ENCODE measurements at regions of chr2 and their contacts with region 1.

Region 1: GRCh38 chr2:74845217-74846011 is 11.5 kb downstream of the HK2 start:
- DNase-seq: peak in 1 of 5 donors; percentile 57
- H3K4me3 ChIP-seq: no peak overlapping the region
- H3K4me3 Mint-ChIP-seq: peak overlapping the region; percentile 75 to 94 (median 80)
- H3K27ac ChIP-seq: peak overlapping the region; percentile 12
- H3K27ac Mint-ChIP-seq: peak overlapping the region; percentile 85 to 94 (median 90)
- H3K4me1 ChIP-seq: peaks cover 98% of the 10 kb centered on the region
- H3K4me1 Mint-ChIP-seq: peaks cover 62 to 100% (median 89%) of the 10 kb centered on the region in 4 donors
- H3K27me3 ChIP-seq: no peaks in the 10 kb centered on the region
- H3K27me3 Mint-ChIP-seq: no peaks in the 10 kb centered on the region

Region 2: GRCh38 chr2:74715078-74715791 is 130.2 kb before region 1 on chr2:
- CTCF ChIA-PET with region 1: interaction called, 81 read pairs
- POLR2A ChIA-PET with region 1: interaction called, 3 read pairs
- intact Hi-C with region 1: no loop called
- DNase-seq: peak; percentile 70 to 78 (median 75)
- H3K4me3 ChIP-seq: peak overlapping the region in 1 of 2 donors; percentile 34
- H3K4me3 Mint-ChIP-seq: peak overlapping the region; percentile 84 to 92 (median 88)
- H3K27ac ChIP-seq: no peak overlapping the region
- H3K27ac Mint-ChIP-seq: peak overlapping the region in 2 of 7 donors; percentile 29 to 46
- H3K4me1 ChIP-seq: peaks cover 6% of the 10 kb centered on the region
- H3K4me1 Mint-ChIP-seq: peaks cover 5 to 10% (median 7%) of the 10 kb centered on the region in 4 donors
- H3K27me3 ChIP-seq: peaks cover 15% of the 10 kb centered on the region
- H3K27me3 Mint-ChIP-seq: peaks cover 6 to 10% of the 10 kb centered on the region in 2 donors

Region 3: DNA sequence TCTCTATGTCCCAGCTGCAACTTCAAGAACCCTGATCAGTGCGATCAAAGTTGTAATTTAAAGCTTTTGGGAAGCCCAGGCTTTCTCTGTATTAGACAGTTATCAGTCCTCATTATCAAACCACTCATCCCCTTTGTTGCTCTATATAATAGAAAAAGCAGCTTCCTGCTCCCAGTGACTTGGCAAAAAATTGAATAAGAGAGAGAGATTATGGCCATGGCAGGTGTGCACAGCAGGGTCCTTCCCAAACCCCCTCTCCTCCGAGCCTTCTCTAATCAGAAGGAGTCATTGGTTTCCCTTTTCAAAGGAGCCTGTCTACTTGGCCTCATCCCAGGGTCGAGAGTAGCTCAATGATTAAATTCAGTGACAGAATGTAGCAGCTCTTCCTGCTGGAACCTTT is 109.9 kb before region 1 on chr2:
- CTCF ChIA-PET with region 1: no interaction called
- POLR2A ChIA-PET with region 1: no interaction called
- intact Hi-C with region 1: no loop called
- DNase-seq: no peak
- H3K4me3 ChIP-seq: no peak overlapping the region
- H3K4me3 Mint-ChIP-seq: no peak overlapping the region
- H3K27ac ChIP-seq: no peak overlapping the region
- H3K27ac Mint-ChIP-seq: peak overlapping the region in 3 of 7 donors; percentile 1 to 53 (median 33)
- H3K4me1 ChIP-seq: no peaks in the 10 kb centered on the region
- H3K4me1 Mint-ChIP-seq: no peaks in the 10 kb centered on the region
- H3K27me3 ChIP-seq: peaks cover 6% of the 10 kb centered on the region
- H3K27me3 Mint-ChIP-seq: peaks cover 14 to 18% of the 10 kb centered on the region in 2 donors

Region 4: DNA sequence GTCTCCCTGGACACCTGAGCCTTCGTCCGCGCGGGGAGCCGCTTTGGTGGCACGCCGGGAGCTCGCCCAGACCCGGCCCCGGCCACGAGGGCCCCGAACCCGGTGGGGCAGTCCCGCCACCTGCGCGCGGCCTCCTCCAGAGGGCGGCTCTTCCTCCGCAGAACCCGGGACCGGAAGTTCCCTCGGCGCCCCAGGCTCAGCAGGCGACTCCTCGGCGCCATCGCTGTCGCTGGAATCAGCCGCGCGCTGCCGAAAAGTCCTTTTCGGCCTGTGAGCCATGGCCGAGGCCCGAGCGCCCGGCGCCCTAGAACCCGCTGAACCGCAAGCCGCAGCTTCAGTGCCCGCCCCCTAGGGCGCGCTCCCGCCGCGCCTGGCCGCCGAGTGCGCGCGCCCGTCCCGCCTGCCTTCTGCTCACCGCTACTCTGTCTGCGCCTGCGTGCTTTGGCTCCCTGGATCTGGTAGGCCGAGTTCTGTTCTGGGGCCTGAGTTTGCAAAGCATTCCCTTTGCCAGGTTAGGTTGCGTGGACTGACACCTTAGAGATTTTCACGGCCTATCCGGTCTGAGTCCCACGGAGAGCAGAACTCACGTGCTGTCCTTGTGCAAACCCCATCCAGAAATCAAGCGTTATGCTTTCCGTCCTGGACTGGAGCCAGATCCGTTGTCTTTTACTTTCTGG is 865.3 kb after region 1 on chr2 and contains the start of gene GCFC2:
- CTCF ChIA-PET with region 1: no interaction called
- POLR2A ChIA-PET with region 1: no interaction called
- intact Hi-C with region 1: loop called (anchors 10 kb)
- DNase-seq: peak; percentile 76 to 85 (median 82)
- H3K4me3 ChIP-seq: peak within 1 kb of the TSS; percentile 32 to 65
- H3K4me3 Mint-ChIP-seq: peak within 1 kb of the TSS; percentile 89 to 96 (median 94)
- H3K27ac ChIP-seq: peak within 1 kb of the TSS; percentile 70
- H3K27ac Mint-ChIP-seq: peak within 1 kb of the TSS; percentile 86 to 98 (median 96)
- H3K4me1 ChIP-seq: peaks cover 32% of the 10 kb centered on the region
- H3K4me1 Mint-ChIP-seq: peaks cover 23 to 33% (median 28%) of the 10 kb centered on the region in 4 donors
- H3K27me3 ChIP-seq: no peaks in the 10 kb centered on the region
- H3K27me3 Mint-ChIP-seq: peaks cover 1% of the 10 kb centered on the region in 2 donors
- total RNA-seq, gene GCFC2: 22.9 to 25.9 TPM

Measured in CD4-positive, alpha-beta memory T cell (primary cell).